Naive thymus-derived CD4-positive, alpha-beta T cell (primary cell): ENCODE measurements at regions of chr20 and their contacts with region 1.

Region 1: DNA sequence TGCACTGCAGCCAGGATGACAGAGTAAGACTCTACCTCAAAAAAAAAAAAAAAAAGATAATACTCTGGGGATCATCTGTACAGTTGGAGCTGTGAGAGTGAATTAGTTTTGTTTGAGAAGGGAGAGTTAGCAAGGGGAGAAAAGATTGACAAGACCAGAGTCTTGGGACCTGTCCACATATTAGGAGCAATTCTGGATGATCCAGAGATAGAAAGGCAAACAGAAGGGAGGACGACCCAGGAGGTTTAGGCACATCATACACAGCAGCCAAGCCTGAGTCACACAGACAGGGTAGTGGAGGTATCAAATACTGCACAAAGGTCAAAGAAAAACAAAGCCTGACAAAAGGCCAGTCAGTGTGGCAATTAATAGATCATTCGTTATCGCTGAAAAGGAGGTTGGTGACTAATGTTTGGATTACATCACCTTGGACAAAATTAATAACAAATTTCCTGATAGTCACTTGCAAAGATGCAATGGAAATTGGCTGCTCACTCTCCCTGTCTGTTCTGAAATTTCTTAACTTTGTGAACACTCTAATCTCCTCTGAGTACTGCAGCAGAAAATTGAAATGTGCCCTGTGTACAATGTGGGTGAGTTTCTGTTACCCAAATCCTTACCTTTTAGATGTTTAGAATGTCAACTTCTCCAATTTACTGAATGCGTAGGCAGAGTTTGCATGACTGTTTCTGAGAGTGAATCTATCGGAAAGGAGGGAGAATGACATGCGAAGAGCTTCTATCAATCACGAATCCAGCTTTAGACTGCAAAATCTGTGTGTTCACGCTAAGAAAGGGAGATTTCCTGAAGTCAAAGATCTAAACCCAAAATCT is 105.4 kb downstream of the TSHZ2 start:
- DNase-seq: no peak
- ATAC-seq: no peak
- H3K4me3 ChIP-seq: no peak overlapping the region
- H3K4me3 Mint-ChIP-seq: no peak overlapping the region
- H3K27ac ChIP-seq: no peak overlapping the region
- H3K27ac Mint-ChIP-seq: no peak overlapping the region
- H3K4me1 ChIP-seq: peaks cover 0 to 37% of the 10 kb centered on the region in 2 donors
- H3K4me1 Mint-ChIP-seq: peaks cover 15 to 44% (median 19%) of the 10 kb centered on the region in 7 donors
- H3K27me3 ChIP-seq: peaks cover 0 to 3% of the 10 kb centered on the region in 2 donors
- H3K27me3 Mint-ChIP-seq: peaks cover 0 to 8% (median 0%) of the 10 kb centered on the region in 5 donors

Region 2: GRCh38 chr20:52529826-52530225 is 547.8 kb before region 1 on chr20:
- CTCF ChIA-PET with region 1: no interaction called
- POLR2A ChIA-PET with region 1: no interaction called
- intact Hi-C with region 1: no loop called
- DNase-seq: no peak
- ATAC-seq: no peak
- H3K4me3 ChIP-seq: no peak overlapping the region
- H3K4me3 Mint-ChIP-seq: no peak overlapping the region
- H3K27ac ChIP-seq: no peak overlapping the region
- H3K27ac Mint-ChIP-seq: no peak overlapping the region
- H3K4me1 ChIP-seq: no peaks in the 10 kb centered on the region
- H3K4me1 Mint-ChIP-seq: peaks cover 0 to under 1% (median 0%) of the 10 kb centered on the region in 7 donors
- H3K27me3 ChIP-seq: no peaks in the 10 kb centered on the region
- H3K27me3 Mint-ChIP-seq: peaks cover 0 to 2% (median 0%) of the 10 kb centered on the region in 5 donors

Region 3: DNA sequence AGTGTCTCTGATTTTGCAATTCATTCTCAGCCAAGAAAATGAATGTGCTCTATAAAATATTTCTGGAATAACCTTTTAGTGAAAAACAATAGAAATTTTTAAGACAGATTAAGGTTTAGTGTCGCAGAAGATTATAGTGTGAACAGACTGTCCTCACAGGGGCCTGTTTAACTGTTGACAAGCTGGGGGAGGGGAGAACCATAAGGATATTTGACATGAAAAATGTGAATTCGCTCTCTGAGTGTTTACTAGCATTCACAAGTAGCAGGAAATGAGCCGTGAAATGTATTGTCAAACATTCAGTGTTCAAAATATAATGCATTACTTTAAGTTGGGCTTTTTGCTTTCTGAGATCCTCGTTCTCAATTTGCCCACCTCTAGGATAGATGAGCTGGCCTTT is 240.2 kb before region 1 on chr20:
- CTCF ChIA-PET with region 1: no interaction called
- POLR2A ChIA-PET with region 1: no interaction called
- intact Hi-C with region 1: no loop called
- DNase-seq: no peak
- ATAC-seq: no peak
- H3K4me3 ChIP-seq: no peak overlapping the region
- H3K4me3 Mint-ChIP-seq: no peak overlapping the region
- H3K27ac ChIP-seq: no peak overlapping the region
- H3K27ac Mint-ChIP-seq: no peak overlapping the region
- H3K4me1 ChIP-seq: no peaks in the 10 kb centered on the region
- H3K4me1 Mint-ChIP-seq: peaks cover 0 to 4% (median 0%) of the 10 kb centered on the region in 7 donors
- H3K27me3 ChIP-seq: no peaks in the 10 kb centered on the region
- H3K27me3 Mint-ChIP-seq: peaks cover 0 to 6% (median 0%) of the 10 kb centered on the region in 5 donors

Region 4: DNA sequence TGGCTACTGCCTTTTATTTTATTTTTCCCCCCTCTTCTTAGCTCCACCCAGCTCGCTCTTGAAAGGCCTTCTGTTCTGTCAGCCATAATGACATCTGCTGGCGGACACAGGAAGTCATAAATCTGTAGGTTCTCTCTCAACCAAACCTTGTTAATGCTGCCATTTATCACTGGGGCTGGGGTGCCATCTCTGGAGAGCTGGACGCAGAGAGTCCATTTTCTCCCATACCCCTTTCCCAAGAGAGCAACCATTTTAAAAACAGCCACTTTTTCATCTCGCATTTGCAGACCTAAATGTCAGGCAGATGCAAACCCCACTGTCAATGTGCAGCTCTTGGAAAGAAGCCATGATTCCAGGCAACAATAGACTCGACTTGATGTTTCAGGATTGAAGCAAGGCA is 118.5 kb before region 1 on chr20:
- CTCF ChIA-PET with region 1: no interaction called
- POLR2A ChIA-PET with region 1: no interaction called
- intact Hi-C with region 1: no loop called
- DNase-seq: no peak
- ATAC-seq: no peak
- H3K4me3 ChIP-seq: no peak overlapping the region
- H3K4me3 Mint-ChIP-seq: no peak overlapping the region
- H3K27ac ChIP-seq: no peak overlapping the region
- H3K27ac Mint-ChIP-seq: peak overlapping the region in 2 of 9 donors; percentile 56 to 73
- H3K4me1 ChIP-seq: no peaks in the 10 kb centered on the region
- H3K4me1 Mint-ChIP-seq: peaks cover 0 to 12% (median 8%) of the 10 kb centered on the region in 7 donors
- H3K27me3 ChIP-seq: no peaks in the 10 kb centered on the region
- H3K27me3 Mint-ChIP-seq: peaks cover 0 to 12% (median under 1%) of the 10 kb centered on the region in 5 donors

Region 5: DNA sequence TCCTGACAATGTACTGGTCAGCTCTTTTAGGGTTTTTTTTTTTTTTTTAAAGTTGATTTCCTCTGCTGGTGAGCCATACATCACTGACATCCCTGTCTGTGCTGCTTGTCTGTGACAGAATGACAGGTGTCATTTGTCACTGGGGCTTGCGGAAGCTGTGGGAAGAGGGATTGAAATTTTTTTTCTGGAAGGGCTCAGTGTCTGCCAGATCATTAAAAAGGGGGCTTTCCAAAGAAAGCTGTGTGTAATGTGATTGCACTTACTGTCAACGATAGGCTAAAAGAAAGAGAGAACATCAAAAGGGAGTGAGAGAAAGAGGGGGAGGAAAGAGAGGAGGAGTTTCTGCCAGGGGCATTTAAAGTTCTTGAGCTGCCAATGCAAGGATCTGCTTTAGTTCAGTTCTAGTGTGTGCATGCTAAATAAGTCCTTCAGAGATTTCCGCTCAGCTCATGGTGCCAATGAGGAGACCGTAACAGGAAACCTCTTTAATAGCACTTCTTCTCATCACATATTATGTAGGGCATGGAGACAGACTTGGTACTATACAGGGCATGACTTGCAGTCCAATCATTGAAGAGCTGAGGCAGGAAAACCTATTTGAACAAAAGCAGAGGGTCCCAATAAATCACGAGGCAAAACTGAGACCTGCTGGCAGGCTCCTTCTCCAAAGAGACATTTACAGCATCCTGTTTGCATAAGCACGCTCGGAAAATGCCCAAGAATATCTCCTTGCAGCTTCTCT is 71.7 kb after region 1 on chr20:
- CTCF ChIA-PET with region 1: no interaction called
- POLR2A ChIA-PET with region 1: no interaction called
- intact Hi-C with region 1: loop called in 1 of 2 experiments (anchors 5 kb)
- DNase-seq: peak in 4 of 9 donors; percentile 2 to 11 (median 6)
- ATAC-seq: peak; percentile 32
- H3K4me3 ChIP-seq: no peak overlapping the region
- H3K4me3 Mint-ChIP-seq: peak overlapping the region in 8 of 10 donors; percentile 12 to 56 (median 35)
- H3K27ac ChIP-seq: no peak overlapping the region
- H3K27ac Mint-ChIP-seq: peak overlapping the region in 3 of 9 donors; percentile 7 to 84 (median 72)
- H3K4me1 ChIP-seq: peaks cover 0 to 13% of the 10 kb centered on the region in 2 donors
- H3K4me1 Mint-ChIP-seq: peaks cover 22 to 65% (median 56%) of the 10 kb centered on the region in 7 donors
- H3K27me3 ChIP-seq: no peaks in the 10 kb centered on the region
- H3K27me3 Mint-ChIP-seq: no peaks in the 10 kb centered on the region